ENCODE measurements at regions of chr1 and their contacts with region 1.

Region 1: GRCh38 chr1:117121776-117122697 is 488 bp upstream of the TRIM45 start:
- DNase-seq: peak; percentile 98
- H3K4me3 ChIP-seq: peak overlapping the region; percentile 18 to 80 (median 59)
- H3K27ac ChIP-seq: peak overlapping the region; percentile 84 to 94 (median 87)
- H3K4me1 ChIP-seq: peaks cover 9 to 11% of the 10 kb centered on the region in 2 donors
- H3K27me3 ChIP-seq: no peaks in the 10 kb centered on the region
- CTCF ChIP-seq: peak; percentile 38 to 82 (median 70)
- POLR2A ChIP-seq: peak in 1 of 2 donors; percentile 45

Region 2: GRCh38 chr1:116806245-116806644 is 315.8 kb before region 1 on chr1:
- intact Hi-C with region 1: no loop called
- DNase-seq: peak in 1 of 2 donors; percentile 15
- H3K4me3 ChIP-seq: no peak overlapping the region
- H3K27ac ChIP-seq: no peak overlapping the region
- H3K4me1 ChIP-seq: no peaks in the 10 kb centered on the region
- H3K27me3 ChIP-seq: no peaks in the 10 kb centered on the region
- CTCF ChIP-seq: no peak
- POLR2A ChIP-seq: no peak

Region 3: DNA sequence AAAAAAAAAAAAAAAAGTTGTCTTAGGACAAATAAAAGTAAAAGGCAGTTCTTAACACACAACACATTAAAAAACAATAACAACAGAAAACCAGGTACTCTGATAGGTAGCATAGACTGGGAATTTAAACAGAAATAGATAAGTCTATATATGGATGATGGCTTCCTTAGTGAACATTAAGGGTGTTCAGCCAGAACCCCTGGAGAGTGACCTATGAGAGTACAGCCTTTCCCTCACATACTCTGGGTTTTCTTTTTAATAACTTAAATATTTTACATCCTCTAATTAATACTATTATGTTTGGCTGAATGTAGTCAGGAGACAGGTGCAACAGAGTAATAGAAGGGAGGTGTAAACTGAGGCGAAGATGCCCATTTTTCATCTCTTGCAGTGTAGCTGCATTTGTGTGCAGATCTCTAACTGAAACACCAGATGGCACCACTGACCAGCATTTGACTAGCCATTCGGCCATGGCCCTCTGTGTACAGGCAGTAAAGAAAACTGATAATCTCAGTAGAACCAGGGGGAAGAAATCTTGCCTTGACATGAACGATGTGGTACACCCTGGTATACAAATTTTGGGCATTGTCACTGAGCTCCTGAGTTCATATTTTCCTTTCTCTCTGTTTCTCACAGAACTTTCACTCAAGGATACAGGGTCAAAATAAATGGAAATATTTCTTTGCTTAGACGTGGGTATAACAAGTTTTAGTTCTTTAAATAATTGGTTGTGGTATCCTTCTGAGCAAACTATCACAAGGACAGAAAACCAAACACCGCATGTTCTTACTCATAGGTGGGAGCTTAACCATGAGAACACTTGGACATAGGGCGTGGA is 54.3 kb before region 1 on chr1:
- intact Hi-C with region 1: loop called (anchors 5 kb)
- DNase-seq: peak; percentile 52 to 66
- H3K4me3 ChIP-seq: no peak overlapping the region
- H3K27ac ChIP-seq: no peak overlapping the region
- H3K4me1 ChIP-seq: no peaks in the 10 kb centered on the region
- H3K27me3 ChIP-seq: no peaks in the 10 kb centered on the region
- CTCF ChIP-seq: peak; percentile 16 to 93 (median 80)
- POLR2A ChIP-seq: no peak